Activated CD8-positive, alpha-beta T cell treated with anti-CD3 and anti-CD28 coated beads, Interleukin-2, amount 10 ng/mL, durations not matched to agents 7 days and 5 days (primary cell): ENCODE measurements at regions of chr10 and their contacts with region 1.

Region 1: GRCh38 chr10:71569775-71570588 is 149.6 kb downstream of the C10orf105 start:
- DNase-seq: peak; percentile 86
- ATAC-seq: peak; percentile 71
- H3K4me3 Mint-ChIP-seq: no peak overlapping the region
- H3K27ac Mint-ChIP-seq: no peak overlapping the region
- H3K4me1 Mint-ChIP-seq: no peaks in the 10 kb centered on the region
- H3K27me3 Mint-ChIP-seq: no peaks in the 10 kb centered on the region

Region 2: GRCh38 chr10:71319042-71319799 is 250.8 kb before region 1 on chr10 and contains the start of gene SLC29A3:
- CTCF ChIA-PET with region 1: interaction called, 72 read pairs
- POLR2A ChIA-PET with region 1: no interaction called
- DNase-seq: peak; percentile 90
- ATAC-seq: peak; percentile 96
- H3K4me3 Mint-ChIP-seq: peak within 1 kb of the TSS; percentile 88
- H3K27ac Mint-ChIP-seq: peak within 1 kb of the TSS; percentile 75
- H3K4me1 Mint-ChIP-seq: peaks cover 37% of the 10 kb centered on the region
- H3K27me3 Mint-ChIP-seq: peaks cover 3% of the 10 kb centered on the region
- total RNA-seq, gene SLC29A3: 3.0 to 3.4 TPM

Region 3: GRCh38 chr10:71383972-71384687 is 185.9 kb before region 1 on chr10:
- CTCF ChIA-PET with region 1: interaction called, 31 read pairs
- POLR2A ChIA-PET with region 1: no interaction called
- DNase-seq: peak; percentile 77
- ATAC-seq: peak; percentile 95
- H3K4me3 Mint-ChIP-seq: no peak overlapping the region
- H3K27ac Mint-ChIP-seq: no peak overlapping the region
- H3K4me1 Mint-ChIP-seq: no peaks in the 10 kb centered on the region
- H3K27me3 Mint-ChIP-seq: peaks cover 9% of the 10 kb centered on the region

Region 4: GRCh38 chr10:71517298-71518169 is 52.4 kb before region 1 on chr10:
- CTCF ChIA-PET with region 1: interaction called, 11 read pairs
- POLR2A ChIA-PET with region 1: no interaction called
- DNase-seq: no peak
- ATAC-seq: no peak
- H3K4me3 Mint-ChIP-seq: no peak overlapping the region
- H3K27ac Mint-ChIP-seq: no peak overlapping the region
- H3K4me1 Mint-ChIP-seq: no peaks in the 10 kb centered on the region
- H3K27me3 Mint-ChIP-seq: peaks cover 4% of the 10 kb centered on the region

Region 5: GRCh38 chr10:71547876-71548846 is 21.8 kb before region 1 on chr10:
- CTCF ChIA-PET with region 1: interaction called, 15 read pairs
- POLR2A ChIA-PET with region 1: no interaction called
- DNase-seq: peak; percentile 50
- ATAC-seq: peak; percentile 72
- H3K4me3 Mint-ChIP-seq: no peak overlapping the region
- H3K27ac Mint-ChIP-seq: no peak overlapping the region
- H3K4me1 Mint-ChIP-seq: no peaks in the 10 kb centered on the region
- H3K27me3 Mint-ChIP-seq: no peaks in the 10 kb centered on the region

Region 6: DNA sequence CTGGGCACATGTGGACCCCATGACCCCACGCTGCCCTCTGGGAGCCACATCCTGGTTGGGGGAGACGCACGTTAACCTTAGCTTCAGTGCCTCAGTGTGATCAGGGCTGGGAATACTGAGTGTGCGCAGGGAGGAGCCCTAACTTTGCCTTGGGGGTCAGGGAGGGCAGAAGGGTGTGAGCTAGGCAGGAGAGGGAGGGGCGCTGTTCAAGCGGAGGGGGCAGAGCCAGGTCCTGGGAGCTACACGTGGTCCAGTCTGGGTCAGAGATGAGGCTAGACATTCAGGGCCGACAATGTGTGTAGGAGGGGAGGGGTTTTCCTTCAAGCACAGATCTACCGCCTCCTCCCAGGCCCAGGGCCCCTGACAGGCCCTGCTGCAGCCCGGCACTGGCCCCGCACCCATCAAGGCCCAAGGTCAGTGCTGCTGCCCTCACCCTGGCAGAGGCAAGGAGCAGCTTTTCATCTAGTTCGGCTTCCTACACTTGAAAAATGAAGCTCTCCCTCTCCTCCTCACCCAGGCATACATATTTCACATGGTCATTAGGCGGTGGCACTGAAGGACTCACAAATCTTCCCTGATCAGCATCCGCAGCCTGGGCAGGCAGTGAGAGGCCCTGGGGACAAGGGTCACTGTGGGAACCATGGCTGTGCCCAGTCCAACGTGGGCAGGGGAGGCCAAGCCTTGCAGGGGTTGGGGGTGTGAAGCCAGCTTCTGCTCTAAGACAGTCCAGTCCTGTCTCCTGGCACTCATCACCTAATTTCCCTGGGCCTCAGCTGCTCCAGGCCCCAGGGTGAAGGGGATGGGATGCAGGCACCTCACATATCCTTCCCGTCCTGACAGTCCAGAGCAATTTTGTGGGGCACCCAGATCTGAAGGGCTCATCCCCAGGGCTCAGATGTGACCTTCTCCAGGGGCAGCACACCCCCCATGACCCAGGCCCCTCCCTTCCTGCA is 102.3 kb after region 1 on chr10:
- CTCF ChIA-PET with region 1: no interaction called
- POLR2A ChIA-PET with region 1: no interaction called
- DNase-seq: no peak
- ATAC-seq: no peak
- H3K4me3 Mint-ChIP-seq: no peak overlapping the region
- H3K27ac Mint-ChIP-seq: peak overlapping the region; percentile 29
- H3K4me1 Mint-ChIP-seq: peaks cover 8% of the 10 kb centered on the region
- H3K27me3 Mint-ChIP-seq: no peaks in the 10 kb centered on the region